Aorta (tissue), 5 donors: ENCODE measurements at regions of chr6 and their contacts with region 1.

Region 1: GRCh38 chr6:100347901-100348550 is 116.7 kb downstream of the SIM1 start:
- DNase-seq: no peak
- ATAC-seq: no peak
- H3K4me3 ChIP-seq: no peak overlapping the region
- H3K27ac ChIP-seq: no peak overlapping the region
- H3K4me1 ChIP-seq: peaks cover 4% of the 10 kb centered on the region in 2 donors
- H3K27me3 ChIP-seq: no peaks in the 10 kb centered on the region

Region 2: DNA sequence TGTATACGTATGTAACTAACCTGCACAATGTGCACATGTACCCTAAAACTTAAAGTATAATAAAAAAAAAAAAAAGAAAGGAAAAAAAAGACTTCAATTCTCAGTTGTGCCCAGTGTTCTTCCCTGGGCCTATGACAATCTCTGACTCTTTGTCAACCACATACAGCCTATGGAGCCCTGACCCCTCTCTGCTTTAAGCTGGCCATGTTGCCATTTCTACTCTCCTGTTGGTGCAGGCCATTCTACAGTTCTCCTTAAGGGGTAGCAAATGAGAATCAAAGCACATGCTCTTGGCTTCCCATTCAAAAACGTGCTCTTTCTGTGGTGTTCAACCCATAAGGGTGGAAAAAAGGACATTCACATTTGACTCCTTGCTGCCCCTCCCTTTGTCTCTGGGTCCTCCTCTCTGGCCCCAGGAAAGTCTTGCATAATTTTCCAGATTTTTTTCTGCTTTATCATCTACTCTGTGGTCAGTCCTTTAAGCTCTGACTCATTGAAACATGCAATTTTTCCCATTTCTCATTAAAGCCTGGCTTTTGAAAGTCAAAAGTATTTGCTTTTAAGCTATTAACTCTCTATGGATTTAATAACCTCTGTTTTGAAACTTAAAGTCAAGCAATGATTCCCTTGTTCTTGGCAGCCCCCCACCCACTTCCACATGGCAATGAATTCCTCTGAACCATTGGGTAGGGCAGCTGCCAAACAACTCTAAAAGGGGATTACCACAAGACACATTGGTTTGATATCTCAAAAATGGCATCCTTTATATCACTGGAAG is 145.4 kb before region 1 on chr6:
- intact Hi-C with region 1: loop called in 1 of 2 experiments (anchors 10 kb)
- DNase-seq: no peak
- ATAC-seq: peak; percentile 77
- H3K4me3 ChIP-seq: no peak overlapping the region
- H3K27ac ChIP-seq: no peak overlapping the region
- H3K4me1 ChIP-seq: no peaks in the 10 kb centered on the region
- H3K27me3 ChIP-seq: no peaks in the 10 kb centered on the region

Region 3: DNA sequence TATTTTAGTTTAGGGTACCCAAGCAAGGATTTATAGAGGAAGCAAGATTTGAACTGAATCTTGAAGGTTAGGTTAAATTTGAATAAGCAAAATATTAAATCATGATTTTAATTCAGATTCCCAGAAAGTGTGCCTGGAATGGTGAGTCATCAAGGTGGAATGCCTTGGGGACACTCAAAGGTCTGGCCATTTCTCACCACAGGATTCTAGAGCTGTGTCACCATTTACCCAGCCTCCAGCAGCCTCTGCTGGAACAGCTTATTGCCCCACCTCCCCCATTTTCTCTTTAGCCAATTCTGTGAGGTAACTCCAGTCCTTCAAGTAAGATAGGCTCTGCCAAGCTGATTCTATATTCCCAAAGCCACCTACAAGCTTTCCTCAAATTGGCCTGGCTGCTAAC is 64.7 kb before region 1 on chr6:
- intact Hi-C with region 1: no loop called
- DNase-seq: no peak
- ATAC-seq: no peak
- H3K4me3 ChIP-seq: no peak overlapping the region
- H3K27ac ChIP-seq: no peak overlapping the region
- H3K4me1 ChIP-seq: no peaks in the 10 kb centered on the region
- H3K27me3 ChIP-seq: no peaks in the 10 kb centered on the region

Region 4: DNA sequence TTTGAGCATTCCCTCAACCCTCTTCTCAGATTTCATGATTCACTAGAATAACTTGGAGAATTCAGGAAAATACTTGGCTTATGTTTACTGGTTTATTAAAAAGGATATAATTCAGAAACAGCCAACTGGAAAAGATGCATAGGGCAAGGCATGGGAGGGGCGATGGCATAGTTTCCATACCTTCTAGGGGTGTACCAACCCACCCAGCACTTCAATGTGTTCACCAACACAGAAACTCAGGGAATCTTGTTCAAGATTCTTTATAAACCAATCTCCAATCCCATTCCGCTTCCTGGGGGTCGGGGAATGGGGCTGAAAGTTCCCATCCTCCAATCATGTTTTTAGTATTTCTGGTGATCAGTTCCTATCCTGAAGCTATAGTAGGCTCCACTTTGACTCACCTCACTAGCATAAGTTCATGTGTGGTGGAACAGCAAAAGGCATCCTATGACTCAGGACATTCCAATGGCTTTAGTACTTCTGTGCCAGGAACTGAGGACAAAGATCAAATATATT is 47.7 kb before region 1 on chr6:
- intact Hi-C with region 1: loop called in 1 of 2 experiments (anchors 5 kb)
- DNase-seq: no peak
- ATAC-seq: no peak
- H3K4me3 ChIP-seq: no peak overlapping the region
- H3K27ac ChIP-seq: no peak overlapping the region
- H3K4me1 ChIP-seq: no peaks in the 10 kb centered on the region
- H3K27me3 ChIP-seq: no peaks in the 10 kb centered on the region